Endothelial cell of umbilical vein (primary cell): ENCODE measurements at regions of chr3 and their contacts with region 1.

Region 1: DNA sequence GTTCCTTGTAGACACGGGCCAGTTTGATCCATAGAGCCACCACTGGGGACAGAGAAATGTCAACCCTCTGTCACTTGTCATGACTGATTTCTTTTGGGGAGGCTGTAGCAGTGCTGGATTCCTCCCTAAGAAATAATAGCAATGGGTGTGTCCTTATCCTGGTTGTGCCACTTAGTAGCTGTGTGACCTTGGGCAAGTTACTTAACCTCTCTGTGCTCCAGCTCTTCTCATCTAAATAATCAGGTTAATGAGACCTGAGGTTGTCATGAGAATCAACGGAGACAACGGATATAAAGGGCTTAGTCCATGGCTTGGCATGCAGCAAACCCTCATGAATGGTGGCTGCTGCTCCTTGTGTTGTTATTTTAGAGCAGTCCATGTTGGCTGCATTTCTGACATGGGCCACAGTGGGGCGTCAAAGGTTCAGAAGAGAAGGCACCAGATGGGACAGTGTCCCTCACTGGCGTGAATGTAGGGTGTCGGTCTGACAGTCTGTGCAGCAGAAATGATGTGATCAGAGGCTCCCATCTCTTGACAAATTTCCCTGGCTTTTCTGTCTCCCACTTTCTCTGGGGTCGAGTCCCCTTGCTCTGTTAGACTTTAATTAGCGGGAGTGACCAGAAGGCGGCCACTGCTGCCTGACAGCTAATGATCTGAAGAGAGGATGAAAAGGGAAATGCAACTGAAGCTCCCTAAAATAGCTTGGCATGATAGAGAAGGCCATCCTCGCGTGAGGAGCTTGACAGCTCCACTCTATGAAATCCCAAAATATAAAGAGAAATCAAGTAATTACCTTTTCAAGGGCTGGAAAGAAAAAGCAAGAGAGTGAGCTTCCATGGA is 209.4 kb downstream of the CADPS start:
- DNase-seq: peak; percentile 52
- H3K4me3 ChIP-seq: no peak overlapping the region
- H3K27ac ChIP-seq: no peak overlapping the region
- H3K4me1 ChIP-seq: no peaks in the 10 kb centered on the region
- H3K27me3 ChIP-seq: peaks cover 2 to 7% of the 10 kb centered on the region in 2 experiments
- CTCF ChIP-seq: peak; percentile 44 to 63
- POLR2A ChIP-seq: no peak

Region 2: GRCh38 chr3:63193629-63194028 is 527.8 kb after region 1 on chr3:
- CTCF ChIA-PET with region 1: no interaction called
- POLR2A ChIA-PET with region 1: no interaction called
- dilution Hi-C with region 1: no loop called
- intact Hi-C with region 1: loop called (anchors 1 kb)
- DNase-seq: peak; percentile 3
- H3K4me3 ChIP-seq: no peak overlapping the region
- H3K27ac ChIP-seq: no peak overlapping the region
- H3K4me1 ChIP-seq: no peaks in the 10 kb centered on the region
- H3K27me3 ChIP-seq: no peaks in the 10 kb centered on the region
- CTCF ChIP-seq: no peak
- POLR2A ChIP-seq: no peak

Region 3: GRCh38 chr3:63228087-63229023 is 562.5 kb after region 1 on chr3:
- CTCF ChIA-PET with region 1: interaction called, 13 read pairs
- POLR2A ChIA-PET with region 1: no interaction called
- dilution Hi-C with region 1: no loop called
- intact Hi-C with region 1: loop called (anchors 1 kb)
- DNase-seq: peak; percentile 13
- H3K4me3 ChIP-seq: no peak overlapping the region
- H3K27ac ChIP-seq: no peak overlapping the region
- H3K4me1 ChIP-seq: no peaks in the 10 kb centered on the region
- H3K27me3 ChIP-seq: no peaks in the 10 kb centered on the region
- CTCF ChIP-seq: peak; percentile 16 to 21
- POLR2A ChIP-seq: no peak

Region 4: DNA sequence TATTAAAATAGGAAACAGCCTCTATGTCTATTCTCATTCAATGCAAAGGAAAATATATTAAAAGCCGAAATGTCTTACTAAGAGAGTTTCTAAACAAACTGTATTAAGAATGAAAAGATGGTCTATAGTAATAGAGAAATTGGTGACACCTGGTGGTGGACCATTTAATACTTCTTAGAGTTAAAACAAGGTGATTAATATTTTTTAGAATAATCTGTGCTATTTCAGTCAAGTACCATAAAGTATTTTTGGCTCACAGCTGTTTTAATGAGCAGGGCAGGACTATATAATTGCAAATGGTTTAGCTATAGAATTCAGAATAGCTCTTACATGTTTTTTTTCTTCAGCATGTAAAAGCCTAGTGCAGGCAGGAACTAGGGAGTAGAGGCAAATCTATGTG is 668.0 kb after region 1 on chr3:
- CTCF ChIA-PET with region 1: interaction called, 7 read pairs
- POLR2A ChIA-PET with region 1: no interaction called
- dilution Hi-C with region 1: no loop called
- intact Hi-C with region 1: loop called (anchors 5 kb)
- DNase-seq: no peak
- H3K4me3 ChIP-seq: no peak overlapping the region
- H3K27ac ChIP-seq: no peak overlapping the region
- H3K4me1 ChIP-seq: no peaks in the 10 kb centered on the region
- H3K27me3 ChIP-seq: no peaks in the 10 kb centered on the region
- CTCF ChIP-seq: no peak
- POLR2A ChIP-seq: no peak

Region 5: DNA sequence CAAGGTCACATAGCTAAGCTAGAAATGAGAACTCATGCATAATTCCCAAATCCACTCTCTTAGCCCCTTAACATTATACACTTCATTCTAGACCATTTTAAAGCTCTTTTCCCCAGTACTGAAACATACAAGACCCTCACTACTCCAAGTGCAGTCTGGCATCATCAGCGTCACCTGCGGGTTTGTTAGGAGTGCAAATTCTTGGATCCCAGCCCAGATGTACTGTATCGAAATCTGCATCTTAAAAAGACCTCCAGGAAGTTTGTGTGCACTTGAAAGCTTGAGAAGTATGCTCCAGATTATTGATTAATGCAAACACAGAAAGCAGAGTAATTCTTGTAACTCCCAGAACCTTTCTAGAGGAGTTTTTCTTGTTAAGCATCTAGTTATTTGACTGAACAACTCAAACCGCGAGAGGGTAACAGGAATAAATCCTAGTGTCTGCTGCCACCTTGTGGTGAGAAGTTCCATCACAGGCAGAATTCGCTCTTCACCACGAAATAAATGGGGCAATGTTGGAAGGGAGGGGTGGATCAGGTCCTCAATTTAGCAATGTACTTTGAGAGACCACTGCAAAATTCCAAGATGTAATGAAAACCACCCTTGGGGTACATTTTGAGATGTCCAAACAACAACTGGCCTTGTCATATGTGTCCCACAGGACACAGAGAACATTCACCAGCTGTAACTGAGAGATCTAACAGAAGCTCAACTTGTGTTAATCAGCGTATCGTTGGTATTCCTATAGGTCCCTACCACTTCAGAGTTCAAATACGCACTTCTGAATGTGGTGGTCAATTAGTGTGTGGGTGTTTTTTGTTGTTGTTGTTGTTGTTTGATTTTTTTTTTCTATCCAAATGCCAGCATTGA is 1152.7 kb after region 1 on chr3:
- CTCF ChIA-PET with region 1: interaction called, 20 read pairs
- POLR2A ChIA-PET with region 1: no interaction called
- dilution Hi-C with region 1: no loop called
- intact Hi-C with region 1: loop called (anchors 2 kb)
- DNase-seq: peak; percentile 61
- H3K4me3 ChIP-seq: no peak overlapping the region
- H3K27ac ChIP-seq: no peak overlapping the region
- H3K4me1 ChIP-seq: no peaks in the 10 kb centered on the region
- H3K27me3 ChIP-seq: no peaks in the 10 kb centered on the region
- CTCF ChIP-seq: peak; percentile 63 to 75
- POLR2A ChIP-seq: no peak